IMR-90 (cell line): ENCODE measurements at regions of chr12 and their contacts with region 1.

Region 1: GRCh38 chr12:67648521-67649260 is at the start of gene DYRK2:
- DNase-seq: peak; percentile 74
- ATAC-seq: peak; percentile 62
- H3K4me3 ChIP-seq: peak within 1 kb of the TSS; percentile 100
- H3K27ac ChIP-seq: peak within 1 kb of the TSS; percentile 92
- H3K4me1 ChIP-seq: peaks cover 6% of the 10 kb centered on the region; the same call in 1 of the 2 replicates
- H3K27me3 ChIP-seq: no peaks in the 10 kb centered on the region
- CTCF ChIP-seq: 0 out of 2 replicates have a peak, but pooled peaks have one; percentile 7
- POLR2A ChIP-seq: peak; percentile 52; the same call in 1 of the 2 replicates
- RAD21 ChIP-seq: no peak
- total RNA-seq, gene DYRK2: 20.3 and 23.1 TPM in 2 replicates

Region 2: DNA sequence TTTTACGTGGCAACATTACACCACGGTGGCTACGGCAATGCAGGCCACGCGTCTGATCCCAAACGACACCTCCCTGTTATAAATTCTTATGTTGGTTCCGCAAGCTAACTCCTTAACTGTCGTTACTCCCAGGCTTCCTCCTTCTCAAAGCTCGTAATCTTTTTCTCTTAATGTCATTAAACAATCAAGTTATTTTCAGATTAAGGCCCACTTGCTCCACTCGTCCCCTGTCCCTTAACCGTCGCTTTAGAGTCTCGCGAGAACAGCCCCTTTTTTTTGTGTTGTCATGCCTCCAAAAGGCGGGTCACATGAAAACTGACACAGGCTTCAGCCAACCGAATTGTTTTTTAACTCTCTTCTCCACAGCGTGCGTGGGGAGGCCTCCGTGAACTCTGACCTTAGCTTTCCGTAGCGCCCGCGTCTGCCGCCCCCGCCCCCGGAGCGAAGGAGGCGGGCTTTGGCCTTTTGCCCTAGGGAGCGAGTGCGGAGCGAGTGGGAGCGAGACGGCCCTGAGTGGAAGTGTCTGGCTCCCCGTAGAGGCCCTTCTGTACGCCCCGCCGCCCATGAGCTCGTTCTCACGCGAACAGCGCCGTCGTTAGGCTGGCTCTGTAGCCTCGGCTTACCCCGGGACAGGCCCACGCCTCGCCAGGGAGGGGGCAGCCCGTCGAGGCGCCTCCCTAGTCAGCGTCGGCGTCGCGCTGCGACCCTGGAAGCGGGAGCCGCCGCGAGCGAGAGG is 379.6 kb before region 1 on chr12 and contains the start of gene CAND1:
- CTCF ChIA-PET with region 1: no interaction called
- POLR2A ChIA-PET with region 1: no interaction called
- dilution Hi-C with region 1: no loop called
- in situ Hi-C with region 1: no loop called
- intact Hi-C with region 1: loop called (anchors 2 kb)
- DNase-seq: peak; percentile 99
- ATAC-seq: peak; percentile 89
- H3K4me3 ChIP-seq: peak within 1 kb of the TSS; percentile 54
- H3K27ac ChIP-seq: peak within 1 kb of the TSS; percentile 97
- H3K4me1 ChIP-seq: no peaks in the 10 kb centered on the region
- H3K27me3 ChIP-seq: no peaks in the 10 kb centered on the region
- CTCF ChIP-seq: no peak
- POLR2A ChIP-seq: peak; percentile 92
- RAD21 ChIP-seq: 0 out of 2 replicates have a peak, but pooled peaks have one; percentile 6
- total RNA-seq, gene CAND1: 91.4 and 139 TPM in 2 replicates

Region 3: GRCh38 chr12:67433385-67434175 is 215.1 kb before region 1 on chr12:
- CTCF ChIA-PET with region 1: no interaction called
- POLR2A ChIA-PET with region 1: no interaction called
- dilution Hi-C with region 1: no loop called
- in situ Hi-C with region 1: loop called (anchors 10 kb)
- intact Hi-C with region 1: no loop called
- DNase-seq: peak; percentile 74
- ATAC-seq: no peak
- H3K4me3 ChIP-seq: no peak overlapping the region
- H3K27ac ChIP-seq: peak overlapping the region; percentile 51; the same call in 1 of the 2 replicates
- H3K4me1 ChIP-seq: peaks cover 15% of the 10 kb centered on the region
- H3K27me3 ChIP-seq: no peaks in the 10 kb centered on the region
- CTCF ChIP-seq: no peak
- POLR2A ChIP-seq: no peak
- RAD21 ChIP-seq: no peak

Region 4: DNA sequence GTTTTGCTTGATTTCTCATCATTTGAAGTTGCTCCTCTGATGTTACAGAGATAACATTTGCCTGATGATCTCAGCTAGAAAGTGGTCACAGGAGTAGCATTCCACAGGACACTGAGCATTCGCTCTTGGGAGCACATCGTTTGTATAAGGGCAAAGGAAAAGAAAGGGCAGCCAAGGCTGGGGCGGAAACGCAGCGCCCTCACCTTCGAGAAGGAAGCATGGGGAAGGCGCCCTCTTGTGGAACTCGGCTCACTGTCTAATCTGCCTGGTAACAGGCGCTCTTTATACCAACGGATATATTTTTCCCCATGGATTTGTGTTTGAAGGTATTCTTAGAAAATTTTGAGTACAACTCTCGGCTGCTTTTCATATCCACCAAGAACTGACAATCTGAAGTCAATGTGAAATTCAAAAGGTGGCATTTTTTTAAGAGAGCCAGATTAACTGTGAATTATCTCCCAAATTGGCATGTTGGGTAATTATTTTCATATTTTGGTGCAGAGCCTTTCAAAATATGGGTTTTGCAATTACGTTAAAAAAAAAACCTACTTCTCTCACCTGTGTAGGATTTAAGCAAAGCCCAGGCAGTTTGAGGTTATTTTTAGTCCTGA is 206.8 kb before region 1 on chr12:
- CTCF ChIA-PET with region 1: no interaction called
- POLR2A ChIA-PET with region 1: no interaction called
- dilution Hi-C with region 1: no loop called
- in situ Hi-C with region 1: loop called (anchors 10 kb)
- intact Hi-C with region 1: loop called (anchors 5 kb)
- DNase-seq: peak; percentile 77
- ATAC-seq: peak; percentile 98
- H3K4me3 ChIP-seq: no peak overlapping the region
- H3K27ac ChIP-seq: no peak overlapping the region
- H3K4me1 ChIP-seq: no peaks in the 10 kb centered on the region
- H3K27me3 ChIP-seq: no peaks in the 10 kb centered on the region
- CTCF ChIP-seq: peak; percentile 92
- POLR2A ChIP-seq: no peak
- RAD21 ChIP-seq: peak; percentile 89

Region 5: GRCh38 chr12:67827820-67828383 is 179.2 kb after region 1 on chr12:
- CTCF ChIA-PET with region 1: no interaction called
- POLR2A ChIA-PET with region 1: no interaction called
- dilution Hi-C with region 1: no loop called
- in situ Hi-C with region 1: no loop called
- intact Hi-C with region 1: loop called (anchors 1 kb)
- DNase-seq: peak; percentile 99
- ATAC-seq: peak; percentile 95
- H3K4me3 ChIP-seq: peak overlapping the region; percentile 55
- H3K27ac ChIP-seq: peak overlapping the region; percentile 39
- H3K4me1 ChIP-seq: peaks cover 4% of the 10 kb centered on the region; the same call in 1 of the 2 replicates
- H3K27me3 ChIP-seq: no peaks in the 10 kb centered on the region
- CTCF ChIP-seq: no peak
- POLR2A ChIP-seq: peak; percentile 65; the same call in 1 of the 2 replicates
- RAD21 ChIP-seq: peak; percentile 26

Region 6: GRCh38 chr12:67943226-67943892 is 294.7 kb after region 1 on chr12:
- CTCF ChIA-PET with region 1: interaction called, 3 read pairs
- POLR2A ChIA-PET with region 1: no interaction called
- dilution Hi-C with region 1: no loop called
- in situ Hi-C with region 1: loop called (anchors 5 kb)
- intact Hi-C with region 1: loop called (anchors 1 kb)
- DNase-seq: peak; percentile 74
- ATAC-seq: peak; percentile 93
- H3K4me3 ChIP-seq: no peak overlapping the region
- H3K27ac ChIP-seq: no peak overlapping the region
- H3K4me1 ChIP-seq: peaks cover 4% of the 10 kb centered on the region; the same call in 1 of the 2 replicates
- H3K27me3 ChIP-seq: peaks cover 2% of the 10 kb centered on the region; the same call in 1 of the 2 replicates
- CTCF ChIP-seq: peak; percentile 79
- POLR2A ChIP-seq: no peak
- RAD21 ChIP-seq: peak; percentile 80